ENCODE measurements at regions of chr16 and their contacts with region 1.

Region 1: DNA sequence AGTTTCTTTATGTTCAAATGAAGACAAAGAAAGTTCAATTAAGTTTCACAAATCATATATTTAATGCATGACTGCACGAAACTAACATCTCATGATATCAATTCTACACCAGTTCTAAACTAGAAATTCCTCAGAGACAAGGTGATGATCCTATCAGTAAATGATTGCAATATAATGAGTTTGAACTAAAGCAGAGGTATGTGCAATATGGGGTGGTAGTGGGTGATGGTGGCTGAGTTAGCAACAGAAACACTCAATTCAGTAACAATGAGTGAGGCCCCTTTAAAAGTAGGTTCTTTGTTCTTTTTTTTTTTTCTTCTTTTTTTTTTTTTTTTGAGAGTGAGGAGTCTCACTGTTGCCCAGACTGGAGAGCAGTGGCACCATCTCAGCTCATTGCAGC is 1551.7 kb upstream of the GOT2 start:
- DNase-seq: no peak
- ATAC-seq: no peak
- H3K4me3 ChIP-seq: no peak overlapping the region
- H3K27ac ChIP-seq: no peak overlapping the region
- H3K4me1 ChIP-seq: no peaks in the 10 kb centered on the region
- H3K27me3 ChIP-seq: no peaks in the 10 kb centered on the region
- CTCF ChIP-seq: no peak
- POLR2A ChIP-seq: no peak

Region 2: GRCh38 chr16:59319871-59320270 is 965.9 kb before region 1 on chr16:
- intact Hi-C with region 1: loop called in 1 of 10 experiments (anchors 5 kb)
- DNase-seq: no peak
- ATAC-seq: no peak
- H3K4me3 ChIP-seq: no peak overlapping the region
- H3K27ac ChIP-seq: no peak overlapping the region
- H3K4me1 ChIP-seq: no peaks in the 10 kb centered on the region
- H3K27me3 ChIP-seq: no peaks in the 10 kb centered on the region
- CTCF ChIP-seq: no peak
- POLR2A ChIP-seq: no peak

Region 3: GRCh38 chr16:60166111-60166510 is 119.7 kb before region 1 on chr16:
- intact Hi-C with region 1: loop called in 1 of 10 experiments (anchors 5 kb)
- DNase-seq: no peak
- ATAC-seq: no peak
- H3K4me3 ChIP-seq: no peak overlapping the region
- H3K27ac ChIP-seq: no peak overlapping the region
- H3K4me1 ChIP-seq: no peaks in the 10 kb centered on the region
- H3K27me3 ChIP-seq: no peaks in the 10 kb centered on the region
- CTCF ChIP-seq: no peak
- POLR2A ChIP-seq: no peak

Region 4: GRCh38 chr16:60206516-60206915 is 79.3 kb before region 1 on chr16:
- intact Hi-C with region 1: no loop called
- DNase-seq: no peak
- ATAC-seq: no peak
- H3K4me3 ChIP-seq: no peak overlapping the region
- H3K27ac ChIP-seq: no peak overlapping the region
- H3K4me1 ChIP-seq: peaks cover 0 to 4% (median 0%) of the 10 kb centered on the region in 12 donors
- H3K27me3 ChIP-seq: no peaks in the 10 kb centered on the region
- CTCF ChIP-seq: no peak
- POLR2A ChIP-seq: no peak

Region 5: DNA sequence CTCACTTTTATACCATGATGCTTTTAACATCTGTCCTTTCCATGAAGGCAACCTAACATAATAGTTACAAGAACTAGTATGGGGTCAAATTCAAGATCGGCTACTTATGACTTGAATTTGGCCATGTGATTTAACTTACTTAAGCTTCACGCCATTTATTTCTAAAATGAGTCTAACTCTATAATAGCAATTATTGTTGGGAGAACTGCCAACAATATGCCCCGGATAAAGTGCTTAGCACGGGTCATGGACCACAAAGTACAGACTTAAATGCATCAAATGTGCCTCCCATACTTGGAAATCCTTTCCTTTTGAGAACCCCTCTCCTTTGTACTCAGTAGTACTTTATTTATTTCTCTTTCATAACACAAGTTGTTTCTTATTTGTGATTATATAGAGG is 51.9 kb after region 1 on chr16:
- intact Hi-C with region 1: no loop called
- DNase-seq: no peak
- ATAC-seq: no peak
- H3K4me3 ChIP-seq: no peak overlapping the region
- H3K27ac ChIP-seq: no peak overlapping the region
- H3K4me1 ChIP-seq: no peaks in the 10 kb centered on the region
- H3K27me3 ChIP-seq: no peaks in the 10 kb centered on the region
- CTCF ChIP-seq: no peak
- POLR2A ChIP-seq: no peak

Region 6: DNA sequence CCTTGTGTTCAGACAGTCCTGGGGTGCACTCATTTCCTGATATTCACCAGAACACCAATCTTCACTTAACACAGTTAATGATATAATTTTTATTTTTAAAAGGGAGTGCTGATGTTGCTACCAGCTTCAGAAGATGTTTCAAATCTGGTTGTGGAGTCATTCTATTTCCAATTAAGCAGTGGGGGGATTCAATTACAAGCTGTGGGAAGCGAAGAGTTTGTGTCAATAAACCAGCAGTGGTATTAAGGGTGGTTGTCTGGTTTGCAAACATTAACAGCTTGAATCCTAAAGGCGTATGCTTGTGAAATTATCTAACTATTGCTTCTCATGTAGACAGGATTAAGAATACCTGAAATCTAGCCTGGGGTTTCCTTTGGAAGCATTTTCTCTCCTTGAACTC is 85.8 kb after region 1 on chr16:
- intact Hi-C with region 1: no loop called
- DNase-seq: no peak
- ATAC-seq: no peak
- H3K4me3 ChIP-seq: no peak overlapping the region
- H3K27ac ChIP-seq: no peak overlapping the region
- H3K4me1 ChIP-seq: no peaks in the 10 kb centered on the region
- H3K27me3 ChIP-seq: peaks cover 0 to 3% (median 0%) of the 10 kb centered on the region in 9 donors
- CTCF ChIP-seq: no peak
- POLR2A ChIP-seq: no peak

Measured in heart left ventricle (tissue), 16 donors.